Gastrocnemius medialis (tissue), 4 donors: ENCODE measurements at regions of chr19 and their contacts with region 1.

Region 1: DNA sequence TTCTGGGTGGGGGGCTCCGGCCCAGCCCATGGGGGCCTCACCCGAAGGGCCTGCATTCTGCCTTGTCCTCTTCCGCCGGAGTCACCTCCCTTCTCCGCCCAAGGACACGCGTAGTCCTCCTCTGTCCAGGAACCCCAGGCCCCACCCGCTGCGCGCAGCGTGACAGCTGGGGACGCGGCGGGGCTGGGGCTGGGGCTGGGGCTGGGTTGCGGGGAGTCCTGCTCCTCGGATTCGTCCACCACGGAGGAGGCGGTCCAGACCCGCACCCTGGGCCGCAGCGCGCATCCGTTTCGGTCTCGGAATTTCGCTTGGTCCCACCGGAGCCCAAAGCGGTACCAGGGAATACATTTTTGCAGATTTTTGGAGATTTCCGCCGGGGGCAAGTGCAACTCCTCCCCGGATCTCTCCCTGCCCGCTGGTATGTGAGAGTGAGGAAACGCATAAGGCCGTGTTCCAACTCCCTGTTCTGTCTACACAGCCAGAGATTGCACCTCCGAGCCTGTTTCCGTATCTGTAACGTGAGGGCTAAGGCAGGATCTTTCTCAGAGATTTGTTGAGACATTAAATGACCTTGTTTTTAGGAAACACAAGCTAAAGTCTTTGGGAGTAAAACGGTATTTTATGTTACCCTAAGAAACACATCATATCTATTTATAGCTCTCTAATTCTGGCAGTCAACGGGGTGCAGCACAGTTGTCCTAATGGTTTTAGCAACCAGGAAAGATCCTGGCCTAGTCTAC is at the start of gene COX7A1:
- DNase-seq: peak; percentile 79 to 91
- ATAC-seq: peak; percentile 78 to 89
- H3K4me3 ChIP-seq: peak within 1 kb of the TSS; percentile 80 to 90 (median 90)
- H3K27ac ChIP-seq: peak within 1 kb of the TSS; percentile 97 to 100 (median 100)
- H3K4me1 ChIP-seq: peaks cover 24 to 29% of the 10 kb centered on the region in 2 donors
- H3K27me3 ChIP-seq: no peaks in the 10 kb centered on the region
- CTCF ChIP-seq: no peak
- POLR2A ChIP-seq: peak; percentile 86 to 87
- total RNA-seq, gene COX7A1: 165 to 421 (median 223) TPM

Region 2: GRCh38 chr19:36132489-36132891 is 20.0 kb before region 1 on chr19:
- in situ Hi-C with region 1: no loop called
- intact Hi-C with region 1: loop called (anchors 1 kb)
- DNase-seq: no peak
- ATAC-seq: no peak
- H3K4me3 ChIP-seq: no peak overlapping the region
- H3K27ac ChIP-seq: no peak overlapping the region
- H3K4me1 ChIP-seq: peaks cover 16 to 20% of the 10 kb centered on the region in 2 donors
- H3K27me3 ChIP-seq: no peaks in the 10 kb centered on the region
- CTCF ChIP-seq: no peak
- POLR2A ChIP-seq: no peak

Region 3: DNA sequence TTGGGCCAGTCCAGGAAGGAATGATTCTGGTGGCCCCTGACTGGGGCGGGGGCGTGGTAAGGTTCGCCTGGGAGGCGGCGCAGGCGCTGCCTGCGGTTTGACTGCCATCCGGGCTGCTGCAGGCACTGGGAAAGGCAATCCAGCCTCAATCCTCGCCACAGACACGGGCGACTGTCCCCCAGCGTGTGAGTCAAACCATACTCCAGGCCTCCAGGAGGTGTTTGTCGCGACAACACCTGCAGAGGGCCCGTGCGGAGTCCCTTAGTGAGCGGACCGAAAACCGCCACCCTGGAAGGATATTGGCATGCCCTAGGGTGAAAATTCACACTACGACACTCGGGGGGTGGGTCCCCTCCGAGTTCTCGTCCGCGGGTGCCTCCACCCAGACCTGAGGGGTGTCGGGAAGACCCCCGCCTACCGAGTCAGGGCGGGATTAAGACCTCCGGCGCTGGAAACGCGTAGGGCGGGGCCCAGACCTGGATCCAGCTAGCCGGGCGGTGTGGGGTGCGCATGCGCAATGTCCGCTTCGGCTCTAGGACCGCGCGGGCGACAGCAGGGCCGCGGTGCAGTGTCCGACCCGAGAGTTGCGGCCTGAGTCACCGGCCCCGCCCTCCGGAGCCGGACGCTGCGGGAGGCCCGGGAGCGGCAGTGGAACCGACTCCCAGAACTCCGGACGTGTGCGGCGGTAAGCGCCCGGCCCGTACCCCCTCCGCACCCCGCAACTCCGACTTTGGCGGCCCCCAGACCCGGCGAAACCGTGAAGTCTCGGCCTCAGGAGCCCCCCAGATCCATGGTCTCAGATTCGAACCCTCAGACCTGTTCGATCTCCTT is 12.8 kb before region 1 on chr19 and contains the start of gene CAPNS1:
- in situ Hi-C with region 1: no loop called
- intact Hi-C with region 1: loop called (anchors 1 kb)
- DNase-seq: peak; percentile 95 to 97
- ATAC-seq: peak; percentile 78 to 86
- H3K4me3 ChIP-seq: peak within 1 kb of the TSS; percentile 90 to 97 (median 92)
- H3K27ac ChIP-seq: peak within 1 kb of the TSS; percentile 97 to 100 (median 98)
- H3K4me1 ChIP-seq: peaks cover 12 to 26% of the 10 kb centered on the region in 2 donors
- H3K27me3 ChIP-seq: no peaks in the 10 kb centered on the region
- CTCF ChIP-seq: peak in 2 of 5 experiments; percentile 8 to 33
- POLR2A ChIP-seq: peak; percentile 98 to 99
- total RNA-seq, gene CAPNS1: 94.8 to 252 (median 165) TPM

Region 4: GRCh38 chr19:36340786-36341386 is 188.4 kb after region 1 on chr19:
- in situ Hi-C with region 1: no loop called
- intact Hi-C with region 1: no loop called
- DNase-seq: no peak
- ATAC-seq: no peak
- H3K4me3 ChIP-seq: peak overlapping the region in 1 of 4 donors; percentile 16
- H3K27ac ChIP-seq: no peak overlapping the region
- H3K4me1 ChIP-seq: no peaks in the 10 kb centered on the region
- H3K27me3 ChIP-seq: no peaks in the 10 kb centered on the region
- CTCF ChIP-seq: no peak
- POLR2A ChIP-seq: no peak